Naive thymus-derived CD4-positive, alpha-beta T cell (primary cell): ENCODE measurements at regions of chr14 and their contacts with region 1.

Region 1: DNA sequence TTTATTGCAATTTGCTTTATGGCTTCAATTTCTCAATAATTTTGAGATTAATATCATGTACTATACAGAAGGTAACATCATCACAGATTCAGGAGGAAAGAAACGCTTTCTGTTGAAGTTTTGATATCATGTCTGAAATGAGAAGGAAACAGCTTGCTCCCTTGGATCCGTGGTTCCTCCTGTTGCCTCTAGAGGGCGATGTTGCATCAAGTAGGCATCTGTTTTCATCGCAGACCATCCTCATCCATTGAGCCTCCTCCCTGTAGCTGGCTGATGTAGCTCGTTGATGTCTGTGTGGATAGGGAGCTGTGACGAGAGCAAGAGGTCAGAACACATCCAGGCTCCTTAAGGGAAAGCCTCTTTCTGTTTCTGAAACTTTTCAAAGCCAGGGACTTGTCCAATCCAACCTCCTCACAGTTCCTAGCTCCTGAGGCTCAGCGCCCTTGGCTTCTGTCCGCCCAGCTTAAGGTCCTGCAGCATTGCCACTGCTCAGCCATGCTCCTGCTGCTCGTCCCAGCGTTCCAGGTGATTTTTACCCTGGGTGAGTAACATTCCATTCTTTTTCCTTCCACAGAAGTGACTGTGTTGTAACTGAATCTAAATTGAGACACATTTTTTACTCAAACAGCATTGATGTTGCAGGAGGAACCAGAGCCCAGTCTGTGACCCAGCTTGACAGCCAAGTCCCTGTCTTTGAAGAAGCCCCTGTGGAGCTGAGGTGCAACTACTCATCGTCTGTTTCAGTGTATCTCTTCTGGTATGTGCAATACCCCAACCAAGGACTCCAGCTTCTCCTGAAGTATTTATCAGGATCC is 304.8 kb upstream of the OR4E1 start:
- DNase-seq: peak; percentile 20 to 71 (median 61)
- ATAC-seq: peak; percentile 85
- H3K4me3 ChIP-seq: peak overlapping the region; percentile 9
- H3K4me3 Mint-ChIP-seq: peak overlapping the region; percentile 43 to 84 (median 74)
- H3K27ac ChIP-seq: peak overlapping the region; percentile 26
- H3K27ac Mint-ChIP-seq: peak overlapping the region in 8 of 9 donors; percentile 60 to 85 (median 76)
- H3K4me1 ChIP-seq: peaks cover 0 to 4% of the 10 kb centered on the region in 2 donors
- H3K4me1 Mint-ChIP-seq: peaks cover 6 to 51% (median 25%) of the 10 kb centered on the region in 7 donors
- H3K27me3 ChIP-seq: no peaks in the 10 kb centered on the region
- H3K27me3 Mint-ChIP-seq: peaks cover 0 to 31% (median 0%) of the 10 kb centered on the region in 5 donors

Region 2: GRCh38 chr14:21940887-21941856 is 37.2 kb before region 1 on chr14:
- CTCF ChIA-PET with region 1: interaction called, 4 read pairs
- POLR2A ChIA-PET with region 1: no interaction called
- intact Hi-C with region 1: loop called (anchors 1 to 5 kb)
- DNase-seq: peak in 7 of 9 donors; percentile 42 to 56 (median 51)
- ATAC-seq: peak; percentile 78
- H3K4me3 ChIP-seq: peak overlapping the region; percentile 30
- H3K4me3 Mint-ChIP-seq: peak overlapping the region; percentile 63 to 88 (median 78)
- H3K27ac ChIP-seq: peak overlapping the region; percentile 56
- H3K27ac Mint-ChIP-seq: peak overlapping the region; percentile 79 to 95 (median 90)
- H3K4me1 ChIP-seq: peaks cover 0 to 8% of the 10 kb centered on the region in 2 donors
- H3K4me1 Mint-ChIP-seq: peaks cover 5 to 48% (median 31%) of the 10 kb centered on the region in 7 donors
- H3K27me3 ChIP-seq: no peaks in the 10 kb centered on the region
- H3K27me3 Mint-ChIP-seq: peaks cover 0 to 33% (median 0%) of the 10 kb centered on the region in 5 donors

Region 3: GRCh38 chr14:21965042-21965441 is 13.3 kb before region 1 on chr14:
- CTCF ChIA-PET with region 1: interaction called, 9 read pairs
- POLR2A ChIA-PET with region 1: interaction called, 3 read pairs
- intact Hi-C with region 1: loop called in 1 of 2 experiments (anchors 1 kb)
- DNase-seq: peak in 8 of 9 donors; percentile 21 to 72 (median 61)
- ATAC-seq: peak; percentile 88
- H3K4me3 ChIP-seq: no peak overlapping the region
- H3K4me3 Mint-ChIP-seq: peak overlapping the region; percentile 50 to 78 (median 70)
- H3K27ac ChIP-seq: no peak overlapping the region
- H3K27ac Mint-ChIP-seq: peak overlapping the region; percentile 12 to 90 (median 78)
- H3K4me1 ChIP-seq: no peaks in the 10 kb centered on the region
- H3K4me1 Mint-ChIP-seq: peaks cover 8 to 48% (median 33%) of the 10 kb centered on the region in 7 donors
- H3K27me3 ChIP-seq: no peaks in the 10 kb centered on the region
- H3K27me3 Mint-ChIP-seq: peaks cover 0 to 12% (median 0%) of the 10 kb centered on the region in 5 donors

Region 4: GRCh38 chr14:21997300-21997699 is 18.9 kb after region 1 on chr14:
- CTCF ChIA-PET with region 1: interaction called, 53 read pairs
- POLR2A ChIA-PET with region 1: interaction called, 9 read pairs
- intact Hi-C with region 1: loop called in 1 of 2 experiments (anchors 2 kb)
- DNase-seq: peak in 6 of 9 donors; percentile 39 to 65 (median 58)
- ATAC-seq: peak; percentile 91
- H3K4me3 ChIP-seq: peak overlapping the region; percentile 51
- H3K4me3 Mint-ChIP-seq: peak overlapping the region; percentile 85 to 96 (median 90)
- H3K27ac ChIP-seq: peak overlapping the region; percentile 54
- H3K27ac Mint-ChIP-seq: peak overlapping the region; percentile 72 to 95 (median 89)
- H3K4me1 ChIP-seq: peaks cover under 1 to 2% of the 10 kb centered on the region in 2 donors
- H3K4me1 Mint-ChIP-seq: peaks cover 1 to 35% (median 19%) of the 10 kb centered on the region in 7 donors
- H3K27me3 ChIP-seq: no peaks in the 10 kb centered on the region
- H3K27me3 Mint-ChIP-seq: peaks cover 0 to 5% (median 0%) of the 10 kb centered on the region in 5 donors

Region 5: GRCh38 chr14:22497144-22497423 is 518.7 kb after region 1 on chr14:
- CTCF ChIA-PET with region 1: no interaction called
- POLR2A ChIA-PET with region 1: no interaction called
- intact Hi-C with region 1: loop called in 1 of 2 experiments (anchors 5 kb)
- DNase-seq: no peak
- ATAC-seq: no peak
- H3K4me3 ChIP-seq: peak overlapping the region; percentile 67
- H3K4me3 Mint-ChIP-seq: peak overlapping the region; percentile 79 to 96 (median 89)
- H3K27ac ChIP-seq: peak overlapping the region; percentile 90
- H3K27ac Mint-ChIP-seq: peak overlapping the region; percentile 90 to 97 (median 95)
- H3K4me1 ChIP-seq: peaks cover 3 to 9% of the 10 kb centered on the region in 2 donors
- H3K4me1 Mint-ChIP-seq: peaks cover 4 to 49% (median 21%) of the 10 kb centered on the region in 7 donors
- H3K27me3 ChIP-seq: no peaks in the 10 kb centered on the region
- H3K27me3 Mint-ChIP-seq: no peaks in the 10 kb centered on the region